Activated CD4-positive, alpha-beta T cell treated with anti-CD3 and anti-CD28 coated beads for 36 hours (primary cell): ENCODE measurements at regions of chr14 and their contacts with region 1.

Region 1: GRCh38 chr14:64715628-64716412 is 11.6 kb downstream of the PLEKHG3 start:
- DNase-seq: no peak
- ATAC-seq: no peak
- H3K4me3 Mint-ChIP-seq: no peak overlapping the region
- H3K27ac Mint-ChIP-seq: no peak overlapping the region
- H3K4me1 Mint-ChIP-seq: peaks cover 23% of the 10 kb centered on the region
- H3K27me3 Mint-ChIP-seq: peaks cover 2% of the 10 kb centered on the region

Region 2: GRCh38 chr14:64515083-64515482 is 200.7 kb before region 1 on chr14:
- CTCF ChIA-PET with region 1: no interaction called
- POLR2A ChIA-PET with region 1: no interaction called
- intact Hi-C with region 1: no loop called
- DNase-seq: no peak
- ATAC-seq: no peak
- H3K4me3 Mint-ChIP-seq: no peak overlapping the region
- H3K27ac Mint-ChIP-seq: peak overlapping the region; percentile 31
- H3K4me1 Mint-ChIP-seq: peaks cover 53% of the 10 kb centered on the region
- H3K27me3 Mint-ChIP-seq: no peaks in the 10 kb centered on the region

Region 3: GRCh38 chr14:65392296-65392695 is 676.5 kb after region 1 on chr14:
- CTCF ChIA-PET with region 1: no interaction called
- POLR2A ChIA-PET with region 1: no interaction called
- intact Hi-C with region 1: no loop called
- DNase-seq: no peak
- ATAC-seq: no peak
- H3K4me3 Mint-ChIP-seq: no peak overlapping the region
- H3K27ac Mint-ChIP-seq: no peak overlapping the region
- H3K4me1 Mint-ChIP-seq: peaks cover 19% of the 10 kb centered on the region
- H3K27me3 Mint-ChIP-seq: no peaks in the 10 kb centered on the region

Region 4: GRCh38 chr14:65661861-65662260 is 946.0 kb after region 1 on chr14:
- CTCF ChIA-PET with region 1: no interaction called
- POLR2A ChIA-PET with region 1: no interaction called
- intact Hi-C with region 1: loop called in 1 of 2 experiments (anchors 10 kb)
- DNase-seq: no peak
- ATAC-seq: no peak
- H3K4me3 Mint-ChIP-seq: no peak overlapping the region
- H3K27ac Mint-ChIP-seq: no peak overlapping the region
- H3K4me1 Mint-ChIP-seq: peaks cover 4% of the 10 kb centered on the region
- H3K27me3 Mint-ChIP-seq: no peaks in the 10 kb centered on the region